ENCODE measurements at regions of chr11 and their contacts with region 1.

Region 1: DNA sequence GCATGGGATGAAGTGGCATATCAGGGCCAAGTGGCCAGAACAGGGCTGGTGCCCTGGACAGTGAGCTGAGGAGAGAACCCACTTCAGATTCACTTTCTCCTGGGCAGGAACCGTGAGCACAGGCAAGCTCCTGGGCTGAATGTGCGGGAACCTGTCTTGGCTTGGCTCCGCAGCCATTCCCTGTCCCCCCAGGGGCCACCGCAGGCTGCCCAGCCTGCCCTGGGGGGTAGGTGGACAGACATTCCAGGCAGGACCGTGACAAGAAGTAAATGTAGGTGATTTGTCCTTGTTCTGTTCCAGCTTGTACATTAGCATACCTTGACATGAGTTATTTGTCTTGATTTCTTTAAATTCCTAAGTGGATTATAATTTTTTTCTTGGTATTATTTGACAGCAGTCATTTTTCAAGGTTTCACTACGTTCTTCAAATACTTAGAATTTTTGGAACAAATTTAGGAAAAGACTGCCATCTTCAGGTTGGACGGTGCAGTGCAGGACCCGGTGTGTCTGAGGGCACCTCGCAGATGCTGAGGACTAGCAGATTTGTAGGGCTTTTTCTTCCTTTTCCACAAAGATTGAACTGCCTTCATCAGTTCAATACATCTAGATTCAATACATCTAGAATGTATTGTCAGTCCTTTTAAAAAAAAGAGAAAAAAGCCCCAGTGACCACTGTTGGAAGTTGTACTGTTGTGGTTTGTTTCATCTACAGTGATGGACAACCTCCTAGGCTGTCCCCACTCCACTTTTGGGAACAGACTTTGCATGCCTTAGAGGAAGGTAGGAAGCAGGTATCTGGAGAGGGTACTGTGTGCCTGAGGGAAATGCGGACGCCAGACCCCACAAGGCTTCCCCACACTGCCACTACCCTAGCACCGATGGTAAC is 115.1 kb upstream of the RASSF10 start:
- DNase-seq: peak in 3 of 5 donors; percentile 40 to 51 (median 49)
- ATAC-seq: no peak
- H3K4me3 ChIP-seq: no peak overlapping the region
- H3K27ac ChIP-seq: peak overlapping the region in 6 of 12 donors; percentile 16 to 84 (median 38)
- H3K4me1 ChIP-seq: peaks cover 0 to 53% (median 21%) of the 10 kb centered on the region in 12 donors
- H3K27me3 ChIP-seq: no peaks in the 10 kb centered on the region
- CTCF ChIP-seq: peak; percentile 79 to 94 (median 89)
- POLR2A ChIP-seq: no peak

Region 2: DNA sequence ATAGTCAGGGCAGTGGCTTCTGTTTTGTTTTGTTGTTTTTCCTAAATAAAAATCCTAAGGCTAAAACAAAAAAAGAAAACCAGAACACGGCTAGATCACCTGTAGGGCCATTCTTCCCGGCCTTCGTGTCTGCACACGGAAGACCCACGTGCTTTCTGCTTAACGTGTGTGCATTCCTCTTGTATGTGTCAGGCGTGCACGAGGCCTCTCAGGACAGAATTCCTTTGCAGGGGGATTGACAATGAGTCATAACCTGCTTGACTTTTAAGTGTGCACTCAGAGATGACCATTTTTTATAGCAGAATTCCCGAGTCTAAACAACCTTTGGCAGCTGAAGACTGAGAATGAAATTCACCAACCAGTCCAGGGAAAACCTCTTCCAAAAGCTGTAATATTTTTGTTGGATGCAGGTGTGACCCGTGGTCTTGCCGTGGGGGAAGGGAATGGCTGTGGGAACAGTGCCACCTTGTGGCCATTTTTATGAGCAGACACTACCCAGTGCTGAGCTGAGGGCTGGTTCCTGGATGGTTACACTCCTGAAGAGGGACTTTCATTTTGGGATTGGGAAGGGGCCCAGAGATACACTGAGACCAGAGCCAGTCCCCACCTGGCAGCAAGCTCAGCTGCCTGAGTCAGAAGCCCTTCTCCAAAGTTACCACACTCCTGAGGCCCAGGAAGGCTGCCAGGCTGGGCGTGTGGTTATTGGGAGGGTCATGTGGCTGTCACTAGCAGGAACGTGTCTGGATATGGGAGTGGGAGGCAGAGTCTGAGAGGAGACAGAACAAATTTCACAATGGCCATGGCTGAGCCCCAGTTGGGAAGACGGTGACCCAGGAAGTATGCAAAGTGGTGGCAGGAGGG is 849.8 kb before region 1 on chr11:
- intact Hi-C with region 1: loop called in 1 of 10 experiments (anchors 10 kb)
- DNase-seq: peak; percentile 80 to 88 (median 81)
- ATAC-seq: peak; percentile 82 to 90 (median 88)
- H3K4me3 ChIP-seq: peak overlapping the region in 3 of 12 donors; percentile 3 to 12 (median 8)
- H3K27ac ChIP-seq: peak overlapping the region in 11 of 12 donors; percentile 31 to 78 (median 66)
- H3K4me1 ChIP-seq: peaks cover 0 to 23% (median 17%) of the 10 kb centered on the region in 12 donors
- H3K27me3 ChIP-seq: no peaks in the 10 kb centered on the region
- CTCF ChIP-seq: peak; percentile 89 to 98 (median 93)
- POLR2A ChIP-seq: no peak

Region 3: GRCh38 chr11:12331239-12331874 is 562.7 kb before region 1 on chr11:
- intact Hi-C with region 1: loop called in 9 of 10 experiments (anchors 1 to 5 kb)
- DNase-seq: peak; percentile 77 to 90 (median 79)
- ATAC-seq: peak; percentile 71 to 90 (median 82)
- H3K4me3 ChIP-seq: no peak overlapping the region
- H3K27ac ChIP-seq: peak overlapping the region in 1 of 12 donors; percentile 73
- H3K4me1 ChIP-seq: peaks cover 0 to 6% (median 0%) of the 10 kb centered on the region in 12 donors
- H3K27me3 ChIP-seq: no peaks in the 10 kb centered on the region
- CTCF ChIP-seq: peak; percentile 61 to 87 (median 79)
- POLR2A ChIP-seq: no peak

Region 4: DNA sequence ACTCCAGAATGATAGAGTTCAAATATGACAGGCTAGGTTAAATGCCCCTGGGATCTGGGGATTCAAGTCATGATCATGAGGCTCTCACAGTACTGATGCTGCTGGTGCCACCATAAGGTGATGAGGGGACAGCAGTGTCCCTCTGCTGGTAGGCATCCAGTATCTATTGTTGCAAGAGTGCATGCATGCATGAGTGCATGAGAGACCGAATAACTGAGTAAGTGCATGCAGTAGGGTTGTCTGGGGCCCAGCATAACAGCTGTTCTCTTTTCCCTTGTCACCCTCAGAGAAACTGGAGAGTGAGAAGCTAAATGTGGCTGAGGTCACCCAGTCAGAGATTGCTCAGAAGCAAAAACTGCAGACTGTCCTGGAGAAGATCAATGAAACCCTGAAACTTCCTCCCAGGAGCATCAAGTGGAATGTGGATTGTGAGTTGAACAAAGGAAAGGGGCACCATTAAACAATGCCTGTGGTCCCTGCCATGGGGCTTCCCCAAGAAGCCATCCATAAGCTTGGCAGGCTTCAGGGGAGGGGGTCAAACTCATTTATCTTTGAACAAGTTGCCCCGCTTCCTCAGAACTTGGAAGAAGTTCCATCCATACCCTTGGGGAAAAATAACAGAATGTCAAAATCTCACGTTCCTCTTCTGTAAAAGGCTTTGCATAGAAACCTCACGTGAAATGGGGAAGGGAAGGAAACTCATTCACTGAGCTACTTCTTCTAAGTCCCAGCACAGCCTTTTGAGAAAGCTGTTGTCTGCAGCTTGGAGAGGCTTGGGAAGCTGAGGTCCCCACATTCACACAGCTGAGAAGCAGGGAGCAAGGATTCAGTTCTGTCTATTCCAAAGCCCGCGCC is 397.6 kb before region 1 on chr11:
- intact Hi-C with region 1: loop called in 1 of 10 experiments (anchors 5 kb)
- DNase-seq: no peak
- ATAC-seq: peak; percentile 38 to 69 (median 52)
- H3K4me3 ChIP-seq: no peak overlapping the region
- H3K27ac ChIP-seq: no peak overlapping the region
- H3K4me1 ChIP-seq: peaks cover 0 to 7% (median 0%) of the 10 kb centered on the region in 12 donors
- H3K27me3 ChIP-seq: no peaks in the 10 kb centered on the region
- CTCF ChIP-seq: peak in 8 of 12 donors; percentile 6 to 44 (median 18)
- POLR2A ChIP-seq: no peak

Region 5: DNA sequence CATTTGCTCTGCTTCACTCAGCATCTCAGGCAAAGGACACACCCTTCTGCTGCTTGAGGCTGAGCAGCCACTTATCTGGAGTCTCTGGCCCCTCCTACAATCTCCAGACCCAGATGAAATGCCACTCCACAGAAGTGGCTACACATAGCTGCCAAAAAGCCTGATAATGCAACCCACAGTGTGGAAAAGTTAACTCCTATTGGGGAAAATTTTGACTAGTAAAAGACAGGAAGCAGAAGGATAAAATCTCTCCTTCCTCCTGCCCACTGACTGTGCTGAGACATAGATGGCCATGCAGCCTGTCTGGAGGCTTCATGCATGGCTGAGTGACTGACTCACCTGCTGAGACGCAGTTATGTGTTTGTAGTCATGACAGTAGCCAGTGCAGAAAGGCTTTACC is 312.1 kb before region 1 on chr11:
- intact Hi-C with region 1: loop called in 1 of 10 experiments (anchors 10 kb)
- DNase-seq: no peak
- ATAC-seq: peak in 2 of 4 donors; percentile 42 to 68
- H3K4me3 ChIP-seq: no peak overlapping the region
- H3K27ac ChIP-seq: no peak overlapping the region
- H3K4me1 ChIP-seq: peaks cover 0 to 20% (median 5%) of the 10 kb centered on the region in 12 donors
- H3K27me3 ChIP-seq: no peaks in the 10 kb centered on the region
- CTCF ChIP-seq: no peak
- POLR2A ChIP-seq: no peak

Region 6: GRCh38 chr11:13189561-13190426 is 295.8 kb after region 1 on chr11:
- intact Hi-C with region 1: no loop called
- DNase-seq: no peak
- ATAC-seq: no peak
- H3K4me3 ChIP-seq: no peak overlapping the region
- H3K27ac ChIP-seq: no peak overlapping the region
- H3K4me1 ChIP-seq: no peaks in the 10 kb centered on the region
- H3K27me3 ChIP-seq: no peaks in the 10 kb centered on the region
- CTCF ChIP-seq: no peak
- POLR2A ChIP-seq: no peak